Body of pancreas (tissue), 4 donors: ENCODE measurements at regions of chr20 and their contacts with region 1.

Region 1: GRCh38 chr20:47389867-47390347 is 33.4 kb upstream of the ZMYND8 start:
- DNase-seq: no peak
- ATAC-seq: no peak
- H3K4me3 ChIP-seq: no peak overlapping the region
- H3K27ac ChIP-seq: no peak overlapping the region
- H3K4me1 ChIP-seq: peaks cover 27% of the 10 kb centered on the region
- H3K27me3 ChIP-seq: no peaks in the 10 kb centered on the region
- CTCF ChIP-seq: no peak
- POLR2A ChIP-seq: no peak

Region 2: GRCh38 chr20:47196091-47197081 is 193.5 kb before region 1 on chr20:
- intact Hi-C with region 1: loop called (anchors 10 kb)
- DNase-seq: peak; percentile 65 to 75 (median 70)
- ATAC-seq: peak; percentile 67
- H3K4me3 ChIP-seq: no peak overlapping the region
- H3K27ac ChIP-seq: no peak overlapping the region
- H3K4me1 ChIP-seq: peaks cover 12% of the 10 kb centered on the region
- H3K27me3 ChIP-seq: no peaks in the 10 kb centered on the region
- CTCF ChIP-seq: peak; percentile 82 to 94 (median 85)
- POLR2A ChIP-seq: no peak

Region 3: DNA sequence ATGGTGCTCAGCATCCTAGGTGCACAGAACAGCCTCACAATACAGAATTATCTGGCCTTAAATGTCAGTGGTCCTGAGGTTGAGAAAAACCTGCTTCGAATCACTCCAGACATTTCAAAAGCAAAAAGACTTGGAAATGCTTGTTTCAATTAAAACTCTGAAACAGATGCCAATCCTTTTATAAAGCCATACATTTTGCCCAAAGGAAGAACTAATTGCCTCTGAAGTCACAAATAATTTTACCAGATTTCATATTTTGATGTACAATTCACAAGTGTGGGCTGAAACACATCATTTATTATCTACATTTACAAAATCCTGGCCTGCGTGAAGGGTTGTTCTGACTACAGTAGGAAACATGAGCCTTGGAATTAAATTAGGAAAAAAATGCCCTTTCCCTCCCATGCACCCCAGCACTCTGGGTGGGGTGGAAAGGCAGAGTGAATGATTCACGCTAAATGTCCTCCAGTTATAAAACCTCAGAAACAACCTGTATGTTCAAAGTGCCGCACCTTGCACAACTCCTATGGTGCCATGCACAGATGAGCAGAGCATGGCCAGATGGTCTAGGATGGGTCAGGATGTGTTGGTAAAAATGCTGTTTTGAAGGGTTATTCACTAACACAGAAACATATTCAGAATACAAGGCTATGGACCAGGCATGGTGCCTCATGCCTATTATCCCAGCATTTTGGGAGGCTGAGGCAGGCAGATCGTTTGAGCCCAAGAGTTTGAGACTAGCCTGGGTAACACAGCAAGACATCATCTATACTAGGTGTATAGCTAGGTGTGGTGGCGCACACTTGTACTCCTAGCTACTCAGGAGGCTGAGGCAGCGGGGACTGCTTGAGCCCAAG is 120.4 kb before region 1 on chr20:
- intact Hi-C with region 1: loop called (anchors 5 kb)
- DNase-seq: no peak
- ATAC-seq: no peak
- H3K4me3 ChIP-seq: no peak overlapping the region
- H3K27ac ChIP-seq: no peak overlapping the region
- H3K4me1 ChIP-seq: peaks cover 11% of the 10 kb centered on the region
- H3K27me3 ChIP-seq: no peaks in the 10 kb centered on the region
- CTCF ChIP-seq: no peak
- POLR2A ChIP-seq: no peak

Region 4: GRCh38 chr20:47620808-47621805 is 231.2 kb after region 1 on chr20:
- intact Hi-C with region 1: loop called (anchors 5 kb)
- DNase-seq: no peak
- ATAC-seq: no peak
- H3K4me3 ChIP-seq: no peak overlapping the region
- H3K27ac ChIP-seq: no peak overlapping the region
- H3K4me1 ChIP-seq: no peaks in the 10 kb centered on the region
- H3K27me3 ChIP-seq: no peaks in the 10 kb centered on the region
- CTCF ChIP-seq: peak; percentile 62 to 97 (median 81)
- POLR2A ChIP-seq: no peak

Region 5: DNA sequence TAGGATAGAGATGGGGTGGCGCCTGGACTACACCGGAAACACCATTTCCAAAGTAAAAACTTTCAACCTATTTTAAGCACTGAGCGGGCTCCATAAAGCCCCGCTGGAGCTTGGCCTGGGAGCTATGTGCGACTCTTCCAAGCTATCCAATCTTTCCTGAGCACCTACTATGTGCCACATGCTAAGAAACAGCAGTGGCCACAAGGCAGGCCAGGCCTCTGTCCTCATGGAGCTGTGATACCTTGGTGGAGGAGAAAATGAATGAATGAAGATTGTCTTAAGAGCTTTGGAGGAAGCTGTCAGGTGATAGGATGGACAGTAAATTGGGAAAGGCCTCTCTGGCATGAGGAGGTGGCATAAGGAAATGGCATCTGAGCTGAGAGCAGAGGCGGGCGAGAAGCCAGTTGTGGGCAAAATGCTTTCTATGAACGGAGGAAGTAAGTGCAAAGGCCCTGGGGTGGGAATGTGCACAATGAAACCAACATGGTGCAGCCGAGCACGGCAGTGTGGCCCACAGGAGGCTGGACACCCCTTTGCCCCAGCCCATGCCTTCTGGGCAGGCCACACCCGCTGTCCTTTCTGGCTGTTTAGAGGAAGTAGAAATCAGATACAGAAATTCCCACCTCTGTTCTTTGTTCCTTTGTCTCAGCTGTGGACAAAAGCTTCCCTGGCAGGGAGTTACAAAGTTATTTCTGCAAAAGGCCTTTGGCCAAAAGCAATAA is 383.2 kb after region 1 on chr20:
- intact Hi-C with region 1: no loop called
- DNase-seq: peak in 3 of 4 donors; percentile 25 to 53 (median 29)
- ATAC-seq: peak; percentile 69
- H3K4me3 ChIP-seq: no peak overlapping the region
- H3K27ac ChIP-seq: peak overlapping the region in 3 of 4 donors; percentile 68 to 86 (median 77)
- H3K4me1 ChIP-seq: peaks cover 11% of the 10 kb centered on the region
- H3K27me3 ChIP-seq: no peaks in the 10 kb centered on the region
- CTCF ChIP-seq: no peak
- POLR2A ChIP-seq: no peak